IMR-90 (cell line): ENCODE measurements at regions of chr4 and their contacts with region 1.

Region 1: DNA sequence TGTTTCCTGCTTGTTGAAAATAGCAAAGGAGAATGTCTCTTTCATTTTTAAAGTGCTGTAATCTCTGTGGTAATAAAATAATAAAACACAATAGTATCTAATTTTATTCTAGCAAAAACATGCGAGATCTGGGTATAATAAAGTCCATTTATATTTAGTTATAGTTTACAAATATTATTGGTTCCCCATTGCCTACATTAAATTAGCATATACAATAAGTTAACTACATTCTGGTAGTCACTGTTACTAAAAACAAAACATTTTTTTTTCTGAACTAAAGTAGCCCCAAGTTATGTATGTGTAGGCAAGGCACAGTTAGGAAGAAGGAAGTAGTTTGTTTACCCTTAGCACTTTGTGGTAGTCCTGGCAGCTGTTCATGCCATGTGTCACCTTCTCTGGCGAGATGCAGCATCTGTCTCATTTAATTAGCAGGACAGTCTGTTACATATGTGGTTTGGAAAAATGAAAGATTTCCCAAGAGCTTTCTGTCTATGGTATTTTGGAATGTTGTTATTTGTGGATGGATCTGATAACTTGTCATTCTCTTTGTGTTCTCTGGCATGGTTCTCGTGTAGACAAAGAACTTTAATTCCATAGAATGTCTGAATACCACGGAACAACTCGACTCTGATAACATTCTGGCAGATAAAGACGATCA is 231.3 kb upstream of the PITX2 start:
- DNase-seq: peak; percentile 84
- ATAC-seq: peak; percentile 84
- H3K4me3 ChIP-seq: no peak overlapping the region
- H3K27ac ChIP-seq: no peak overlapping the region
- H3K4me1 ChIP-seq: no peaks in the 10 kb centered on the region
- H3K27me3 ChIP-seq: peaks cover 4% of the 10 kb centered on the region; the same call in 1 of the 2 replicates
- CTCF ChIP-seq: no peak
- POLR2A ChIP-seq: no peak
- RAD21 ChIP-seq: no peak

Region 2: DNA sequence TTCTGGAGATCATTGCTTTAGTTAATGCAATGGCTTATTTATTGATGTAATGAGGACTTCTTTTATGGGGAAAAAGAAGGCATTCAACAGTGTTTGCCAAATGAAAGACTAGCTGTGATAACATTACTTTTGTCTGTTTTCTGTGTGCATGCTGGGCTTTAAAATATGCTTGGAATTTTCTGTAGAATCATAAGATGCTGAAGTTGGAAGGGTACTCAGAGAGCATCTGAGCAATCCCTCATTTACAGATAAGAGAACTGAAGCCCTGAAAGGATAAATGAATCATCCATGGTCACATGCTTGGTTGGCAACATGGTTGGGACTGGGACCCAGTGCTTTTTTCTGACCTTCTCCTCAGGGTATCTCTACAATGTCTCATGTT is 199.9 kb before region 1 on chr4:
- CTCF ChIA-PET with region 1: no interaction called
- POLR2A ChIA-PET with region 1: no interaction called
- dilution Hi-C with region 1: no loop called
- in situ Hi-C with region 1: no loop called
- intact Hi-C with region 1: loop called (anchors 5 kb)
- DNase-seq: peak; percentile 32
- ATAC-seq: peak; percentile 71
- H3K4me3 ChIP-seq: no peak overlapping the region
- H3K27ac ChIP-seq: no peak overlapping the region
- H3K4me1 ChIP-seq: no peaks in the 10 kb centered on the region
- H3K27me3 ChIP-seq: no peaks in the 10 kb centered on the region
- CTCF ChIP-seq: no peak
- POLR2A ChIP-seq: no peak
- RAD21 ChIP-seq: no peak

Region 3: GRCh38 chr4:110769578-110769977 is 84.6 kb before region 1 on chr4:
- CTCF ChIA-PET with region 1: no interaction called
- POLR2A ChIA-PET with region 1: no interaction called
- dilution Hi-C with region 1: no loop called
- in situ Hi-C with region 1: no loop called
- intact Hi-C with region 1: no loop called
- DNase-seq: no peak
- ATAC-seq: no peak
- H3K4me3 ChIP-seq: no peak overlapping the region
- H3K27ac ChIP-seq: no peak overlapping the region
- H3K4me1 ChIP-seq: no peaks in the 10 kb centered on the region
- H3K27me3 ChIP-seq: no peaks in the 10 kb centered on the region
- CTCF ChIP-seq: no peak
- POLR2A ChIP-seq: no peak
- RAD21 ChIP-seq: no peak